G401 (cell line): ENCODE measurements at regions of chr20 and their contacts with region 1.

Region 1: DNA sequence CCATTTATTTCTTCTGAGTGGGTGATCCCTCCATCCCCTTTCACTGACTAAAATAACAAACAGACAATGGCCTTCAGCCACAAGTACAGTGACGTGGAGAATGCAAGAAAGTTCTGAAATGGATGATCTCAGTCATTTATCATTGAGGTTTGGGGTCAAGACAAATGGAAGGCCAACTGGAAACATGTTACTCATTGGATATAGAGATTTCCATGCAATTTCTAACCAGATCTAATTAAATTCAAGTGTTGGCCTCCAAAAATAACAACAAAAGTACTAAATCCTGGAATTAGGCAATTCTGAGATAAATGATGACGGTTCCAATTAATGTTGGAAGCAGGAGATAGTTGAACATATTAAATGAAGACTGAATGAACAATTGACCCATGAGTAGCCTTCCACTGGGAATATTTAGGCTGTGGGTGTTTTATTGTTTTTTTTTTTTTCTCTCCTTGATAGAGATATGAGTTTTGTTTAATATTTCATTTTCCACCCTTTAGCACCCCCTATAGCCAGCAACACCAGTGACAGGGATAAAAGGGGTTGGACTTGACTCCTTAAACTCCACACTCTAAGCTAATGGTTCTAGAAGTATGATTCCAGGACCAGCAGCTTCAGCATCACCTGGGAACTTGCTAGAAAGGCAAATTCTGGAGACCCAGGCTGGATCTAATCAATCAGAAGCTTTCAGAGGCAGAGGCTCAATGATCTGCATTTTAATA is 112.8 kb downstream of the BCAS1 start:
- DNase-seq: no peak

Region 2: DNA sequence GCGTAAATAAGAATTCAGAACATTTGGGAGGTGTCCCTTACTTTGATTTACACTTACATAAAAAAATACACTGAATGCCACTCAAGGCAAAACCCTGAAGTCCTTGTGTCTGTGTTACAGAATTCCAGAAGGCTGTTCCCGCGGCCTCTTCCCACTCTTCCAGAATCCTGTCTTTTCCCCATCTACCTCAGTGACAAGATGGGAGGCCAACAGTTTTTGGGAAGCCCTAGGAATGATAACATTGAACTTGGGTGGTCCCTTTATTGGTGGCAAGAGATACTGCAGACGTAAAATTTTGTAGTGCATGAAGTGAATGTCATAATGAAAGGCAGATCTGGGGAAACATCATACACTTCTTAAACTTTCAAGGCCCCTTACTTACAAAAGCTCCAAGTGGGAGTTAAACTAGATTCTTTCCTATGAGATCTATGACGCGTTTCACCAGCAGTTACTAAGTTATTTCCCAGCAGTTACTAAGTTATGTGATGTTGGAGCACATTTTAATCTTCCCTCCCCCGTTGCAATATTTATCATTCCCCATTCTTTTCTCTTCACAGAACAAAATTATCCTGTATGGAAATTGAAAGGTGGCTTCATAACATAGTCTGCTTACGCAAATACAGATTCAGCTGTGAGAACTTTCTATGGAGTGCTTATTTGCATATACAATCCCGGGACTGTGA is 33.3 kb after region 1 on chr20:
- in situ Hi-C with region 1: loop called (anchors 5 kb)
- DNase-seq: no peak